Panc1 (cell line): ENCODE measurements at regions of chr1 and their contacts with region 1.

Region 1: GRCh38 chr1:46223472-46223943 is 20.4 kb downstream of the LURAP1 start:
- DNase-seq: peak; percentile 86
- ATAC-seq: peak; percentile 96
- H3K4me3 ChIP-seq: no peak overlapping the region
- H3K27ac ChIP-seq: peak overlapping the region; percentile 26; the same call in 1 of the 2 replicates
- H3K4me1 ChIP-seq: peaks cover 7% of the 10 kb centered on the region; the same call in 1 of the 2 replicates
- H3K27me3 ChIP-seq: no peaks in the 10 kb centered on the region
- CTCF ChIP-seq: peak; percentile 98

Region 2: GRCh38 chr1:45718289-45718688 is 505.2 kb before region 1 on chr1:
- CTCF ChIA-PET with region 1: no interaction called
- POLR2A ChIA-PET with region 1: interaction called, 18 read pairs
- in situ Hi-C with region 1: no loop called
- intact Hi-C with region 1: no loop called
- DNase-seq: no peak
- ATAC-seq: no peak
- H3K4me3 ChIP-seq: no peak overlapping the region
- H3K27ac ChIP-seq: no peak overlapping the region
- H3K4me1 ChIP-seq: no peaks in the 10 kb centered on the region
- H3K27me3 ChIP-seq: no peaks in the 10 kb centered on the region
- CTCF ChIP-seq: no peak

Region 3: GRCh38 chr1:46036894-46037839 is 186.3 kb before region 1 on chr1:
- CTCF ChIA-PET with region 1: interaction called, 10 read pairs
- POLR2A ChIA-PET with region 1: no interaction called
- in situ Hi-C with region 1: no loop called
- intact Hi-C with region 1: loop called (anchors 2 kb)
- DNase-seq: peak; percentile 71
- ATAC-seq: peak; percentile 82
- H3K4me3 ChIP-seq: no peak overlapping the region
- H3K27ac ChIP-seq: peak overlapping the region; percentile 34
- H3K4me1 ChIP-seq: peaks cover 7% of the 10 kb centered on the region; the same call in 1 of the 2 replicates
- H3K27me3 ChIP-seq: no peaks in the 10 kb centered on the region
- CTCF ChIP-seq: peak; percentile 96

Region 4: DNA sequence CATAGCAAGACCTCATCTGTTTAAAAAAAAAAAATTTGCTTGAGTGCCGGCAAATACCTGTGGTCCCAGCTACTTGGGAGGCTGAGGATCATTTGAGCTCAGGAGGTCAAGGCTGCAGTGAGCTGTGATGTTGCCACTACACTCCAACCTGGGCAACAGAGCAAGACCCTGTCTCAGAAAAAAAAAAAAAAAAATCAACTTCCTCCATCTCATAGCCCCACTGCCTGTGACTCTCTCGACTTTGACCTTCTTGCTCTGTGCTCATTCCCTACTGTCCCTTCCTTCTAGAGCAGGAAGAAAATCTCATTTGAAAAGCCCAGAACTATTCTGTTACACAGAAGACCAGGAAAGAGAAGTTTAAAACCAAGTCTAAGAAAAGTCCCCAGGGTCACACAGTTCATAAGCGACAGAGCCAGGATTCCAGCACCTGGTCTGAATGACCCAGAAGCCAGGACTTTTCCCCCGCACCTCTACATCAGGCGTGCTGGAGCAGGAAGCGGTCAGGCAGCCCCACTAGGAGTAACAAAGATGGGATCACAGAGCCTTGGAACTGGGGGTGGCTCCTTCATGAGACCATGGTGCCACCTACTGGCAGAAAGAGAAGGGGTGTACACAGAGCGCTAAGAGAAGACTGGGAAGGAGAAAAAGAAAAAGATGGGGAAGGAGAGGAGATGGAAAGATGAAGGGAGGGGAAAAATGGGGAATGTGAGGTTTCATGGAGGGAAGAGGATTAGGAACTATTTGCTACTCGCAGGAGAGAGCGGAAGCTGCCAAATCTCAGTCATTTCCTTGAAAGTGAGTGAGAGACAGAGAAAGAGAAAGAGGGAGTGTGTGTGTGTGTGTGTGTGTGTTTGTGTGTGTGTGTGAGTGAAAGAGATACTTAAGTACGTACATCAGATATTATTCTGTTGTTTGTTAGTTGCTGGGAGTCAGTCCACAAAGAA is 44.1 kb before region 1 on chr1:
- CTCF ChIA-PET with region 1: interaction called, 17 read pairs
- POLR2A ChIA-PET with region 1: interaction called, 3 read pairs
- in situ Hi-C with region 1: no loop called
- intact Hi-C with region 1: loop called (anchors 2 kb)
- DNase-seq: peak; percentile 78
- ATAC-seq: peak; percentile 75
- H3K4me3 ChIP-seq: no peak overlapping the region; a peak in 1 of 4 replicates
- H3K27ac ChIP-seq: peak overlapping the region; percentile 40; the same call in 1 of the 2 replicates
- H3K4me1 ChIP-seq: peaks cover 59% of the 10 kb centered on the region
- H3K27me3 ChIP-seq: no peaks in the 10 kb centered on the region
- CTCF ChIP-seq: peak; percentile 92

Region 5: DNA sequence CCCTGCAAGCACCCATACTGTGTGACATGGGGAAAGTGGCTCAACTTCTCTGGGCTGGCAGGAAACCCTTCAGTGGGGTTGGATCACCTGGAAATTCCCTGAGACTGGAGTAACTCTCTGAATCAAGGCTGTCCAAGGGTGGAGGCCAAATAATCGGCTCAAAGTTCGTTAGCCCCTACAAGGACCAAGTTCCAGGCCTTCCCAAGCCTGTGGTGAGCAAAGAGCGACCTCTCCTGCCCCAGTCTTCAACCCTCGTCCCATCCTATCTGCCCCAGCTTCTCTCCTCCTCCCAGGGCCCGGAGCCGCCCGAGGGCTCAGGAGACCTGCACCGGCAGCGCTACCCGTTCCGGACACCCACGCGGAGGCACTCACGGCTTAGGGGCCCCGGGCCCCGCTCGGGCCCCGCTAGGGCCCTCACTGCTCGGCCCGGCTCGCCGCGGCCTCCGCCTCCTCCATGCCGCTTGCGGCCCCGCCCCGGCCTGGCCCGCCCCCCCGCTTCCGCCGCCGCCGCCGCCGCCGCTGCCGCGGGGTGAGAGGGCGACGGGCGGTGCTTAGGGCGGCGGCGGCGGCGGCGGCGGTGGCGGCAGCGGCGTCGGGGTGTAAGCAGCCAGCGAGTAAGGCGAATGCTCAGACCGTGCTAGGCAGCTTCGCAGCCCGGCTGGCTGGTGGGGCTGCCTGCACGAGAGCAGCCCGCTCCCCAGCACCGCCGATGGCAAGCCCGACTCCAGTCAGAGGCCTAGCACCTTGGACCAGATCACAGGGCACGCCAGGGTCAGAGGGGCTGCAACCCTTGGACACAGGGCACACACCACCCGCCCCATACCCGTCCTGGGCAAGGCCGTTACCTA is 25.3 kb before region 1 on chr1 and contains the start of gene POMGNT1:
- CTCF ChIA-PET with region 1: interaction called, 12 read pairs
- POLR2A ChIA-PET with region 1: no interaction called
- in situ Hi-C with region 1: no loop called
- intact Hi-C with region 1: no loop called
- DNase-seq: no peak
- ATAC-seq: peak; percentile 95
- H3K4me3 ChIP-seq: peak within 1 kb of the TSS; percentile 88 to 89
- H3K27ac ChIP-seq: peak within 1 kb of the TSS; percentile 97
- H3K4me1 ChIP-seq: peaks cover 21% of the 10 kb centered on the region
- H3K27me3 ChIP-seq: no peaks in the 10 kb centered on the region
- CTCF ChIP-seq: no peak
- total RNA-seq, gene POMGNT1: 178 TPM

Region 6: DNA sequence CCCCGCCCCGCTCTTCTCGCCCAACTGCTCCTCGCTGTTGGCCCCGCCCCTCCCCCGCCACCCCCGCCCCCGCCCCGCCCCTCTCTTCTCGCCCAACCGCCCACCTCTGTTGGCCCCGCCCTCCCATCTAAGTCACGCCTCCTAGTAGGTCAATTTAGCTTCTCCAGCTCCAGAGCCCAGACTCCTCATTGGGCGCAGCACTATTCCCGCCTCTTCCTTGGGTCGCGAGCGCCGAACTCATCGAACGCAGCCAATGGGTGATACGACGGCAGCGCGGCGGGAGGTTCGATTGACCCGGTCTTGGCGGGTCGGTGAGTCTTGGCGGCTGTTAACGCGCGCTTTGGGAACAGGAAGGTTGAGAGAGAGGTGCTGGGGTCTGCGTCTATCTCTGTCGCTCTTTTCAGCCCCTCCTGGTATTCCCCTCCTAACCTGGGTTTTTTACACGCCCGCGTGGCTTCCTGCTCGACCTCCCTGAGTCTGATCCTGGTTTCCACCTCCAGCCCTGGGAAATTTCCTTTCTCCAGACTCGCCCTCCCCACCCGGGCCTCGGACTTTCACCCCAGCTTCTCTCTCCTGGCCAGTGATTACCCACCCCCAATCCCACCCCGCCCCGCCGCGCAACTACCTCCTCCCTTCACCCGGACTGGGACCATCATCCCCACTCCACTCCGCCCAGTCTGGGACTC is 24.1 kb after region 1 on chr1 and contains the start of gene RAD54L:
- CTCF ChIA-PET with region 1: interaction called, 12 read pairs
- POLR2A ChIA-PET with region 1: interaction called, 10 read pairs
- in situ Hi-C with region 1: no loop called
- intact Hi-C with region 1: no loop called
- DNase-seq: peak; percentile 88
- ATAC-seq: peak; percentile 96
- H3K4me3 ChIP-seq: peak within 1 kb of the TSS; percentile 64 to 91
- H3K27ac ChIP-seq: peak within 1 kb of the TSS; percentile 83
- H3K4me1 ChIP-seq: peaks cover 22% of the 10 kb centered on the region
- H3K27me3 ChIP-seq: no peaks in the 10 kb centered on the region
- CTCF ChIP-seq: no peak
- total RNA-seq, gene RAD54L: 29.4 TPM